Dorsolateral prefrontal cortex (tissue), 120 donors: ENCODE measurements at regions of chr22 and their contacts with region 1.

Region 1: GRCh38 chr22:44735540-44736488 is 16.6 kb upstream of the ARHGAP8 start:
- DNase-seq: peak in 8 of 10 donors; percentile 58 to 83 (median 73)
- H3K4me3 ChIP-seq: no peak overlapping the region
- H3K27ac ChIP-seq: no peak overlapping the region
- H3K27me3 ChIP-seq: peaks cover 0 to 12% (median 0%) of the 10 kb centered on the region in 45 donors
- CTCF ChIP-seq: peak; percentile 91 to 100 (median 99)

Region 2: GRCh38 chr22:44697423-44698141 is 38.2 kb before region 1 on chr22:
- intact Hi-C with region 1: loop called (anchors 1 to 2 kb)
- DNase-seq: peak; percentile 23 to 77 (median 64)
- H3K4me3 ChIP-seq: no peak overlapping the region
- H3K27ac ChIP-seq: no peak overlapping the region
- H3K27me3 ChIP-seq: peaks cover 0 to 28% (median 5%) of the 10 kb centered on the region in 45 donors
- CTCF ChIP-seq: peak in 55 of 56 donors; percentile 58 to 98 (median 91)

Region 3: DNA sequence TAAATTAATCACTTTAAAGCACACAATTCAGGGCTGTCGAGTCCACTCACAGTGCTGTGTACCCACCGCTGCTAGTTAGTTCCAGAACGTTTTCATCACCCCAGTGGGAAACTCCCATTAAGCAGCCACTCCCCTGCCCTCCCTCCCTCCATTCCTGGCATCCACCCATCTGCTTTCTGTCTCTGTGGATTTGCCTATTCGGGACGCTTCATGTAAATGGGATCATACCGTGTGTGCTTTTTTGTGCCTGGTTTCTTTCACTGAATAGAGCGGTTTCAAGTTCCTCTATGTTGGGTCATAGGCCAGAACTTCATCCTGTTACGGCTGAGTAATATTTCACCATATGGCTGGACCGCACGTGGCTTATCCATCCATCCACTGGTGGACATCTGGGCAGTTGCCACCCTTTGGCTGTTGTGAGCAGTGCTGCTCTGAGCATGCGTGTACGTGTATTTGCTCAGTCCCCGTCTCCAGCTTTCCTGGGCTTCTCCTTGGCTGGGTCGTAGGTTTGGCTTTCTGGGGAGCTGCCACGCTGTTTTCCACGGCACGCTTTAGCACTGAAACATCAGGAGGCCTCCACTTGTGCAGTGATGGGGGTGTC is 46.6 kb after region 1 on chr22:
- intact Hi-C with region 1: no loop called
- DNase-seq: no peak
- H3K4me3 ChIP-seq: no peak overlapping the region
- H3K27ac ChIP-seq: no peak overlapping the region
- H3K27me3 ChIP-seq: peaks cover 0 to 5% (median 0%) of the 10 kb centered on the region in 45 donors
- CTCF ChIP-seq: no peak